Mammary epithelial cell (primary cell): ENCODE measurements at regions of chr17 and their contacts with region 1.

Region 1: GRCh38 chr17:28216528-28216927 is 102.5 kb upstream of the TMEM97 start:
- DNase-seq: peak; percentile 65
- H3K4me3 ChIP-seq: no peak overlapping the region
- H3K27ac ChIP-seq: no peak overlapping the region
- H3K4me1 ChIP-seq: peaks cover 8% of the 10 kb centered on the region
- H3K27me3 ChIP-seq: no peaks in the 10 kb centered on the region
- CTCF ChIP-seq: no peak

Region 2: GRCh38 chr17:28293994-28294393 is 77.5 kb after region 1 on chr17:
- CTCF ChIA-PET with region 1: no interaction called
- dilution Hi-C with region 1: loop called (anchors 5 kb)
- in situ Hi-C with region 1: no loop called
- intact Hi-C with region 1: no loop called
- DNase-seq: no peak
- H3K4me3 ChIP-seq: no peak overlapping the region
- H3K27ac ChIP-seq: no peak overlapping the region
- H3K4me1 ChIP-seq: no peaks in the 10 kb centered on the region
- H3K27me3 ChIP-seq: peaks cover 2% of the 10 kb centered on the region
- CTCF ChIP-seq: no peak